HCT116 (cell line): ENCODE measurements at regions of chr14 and their contacts with region 1.

Region 1: GRCh38 chr14:20697273-20698017 is 8.9 kb downstream of the ANG start:
- DNase-seq: peak; percentile 55
- ATAC-seq: peak; percentile 98
- H3K4me3 ChIP-seq: no peak overlapping the region
- H3K27ac ChIP-seq: no peak overlapping the region
- H3K4me1 ChIP-seq: peaks cover 0 to 3% of the 10 kb centered on the region in 2 experiments; a peak in 1 of 4 replicates
- H3K27me3 ChIP-seq: no peaks in the 10 kb centered on the region
- CTCF ChIP-seq: peak; percentile 78 to 85 (median 80)
- POLR2A ChIP-seq: no peak
- RAD21 ChIP-seq: peak; percentile 81

Region 2: DNA sequence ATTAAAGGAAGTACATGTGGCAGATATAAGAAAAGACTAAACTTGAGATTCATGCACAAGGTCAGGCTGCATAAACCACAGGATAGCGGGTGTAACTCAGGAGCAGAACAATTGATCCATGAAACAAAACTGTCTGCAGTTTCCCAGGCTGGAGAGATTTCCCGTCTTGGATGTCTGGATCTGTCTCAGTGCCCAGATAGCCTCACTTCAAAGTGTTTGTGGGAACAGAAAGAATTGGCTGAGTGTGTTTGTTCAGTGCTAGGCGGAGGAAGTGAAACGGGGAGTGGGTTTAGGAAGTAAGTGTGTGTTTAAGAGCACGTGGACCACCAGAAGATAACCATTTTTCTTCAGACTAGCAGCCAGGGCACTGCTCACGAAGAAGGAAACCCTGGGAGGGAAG is 193.5 kb before region 1 on chr14:
- CTCF ChIA-PET with region 1: no interaction called
- POLR2A ChIA-PET with region 1: no interaction called
- RAD21 ChIA-PET with region 1: no interaction called
- intact Hi-C with region 1: no loop called
- DNase-seq: no peak
- ATAC-seq: no peak
- H3K4me3 ChIP-seq: no peak overlapping the region
- H3K27ac ChIP-seq: no peak overlapping the region
- H3K4me1 ChIP-seq: peaks cover 5 to 8% of the 10 kb centered on the region in 2 experiments; a peak in 3 of 4 replicates
- H3K27me3 ChIP-seq: no peaks in the 10 kb centered on the region
- CTCF ChIP-seq: no peak
- POLR2A ChIP-seq: no peak
- RAD21 ChIP-seq: no peak

Region 3: GRCh38 chr14:20707622-20708021 is 10.2 kb after region 1 on chr14:
- CTCF ChIA-PET with region 1: no interaction called
- POLR2A ChIA-PET with region 1: no interaction called
- RAD21 ChIA-PET with region 1: no interaction called
- intact Hi-C with region 1: no loop called
- DNase-seq: no peak
- ATAC-seq: no peak
- H3K4me3 ChIP-seq: no peak overlapping the region
- H3K27ac ChIP-seq: no peak overlapping the region
- H3K4me1 ChIP-seq: no peaks in the 10 kb centered on the region
- H3K27me3 ChIP-seq: no peaks in the 10 kb centered on the region
- CTCF ChIP-seq: no peak
- POLR2A ChIP-seq: no peak
- RAD21 ChIP-seq: no peak

Region 4: DNA sequence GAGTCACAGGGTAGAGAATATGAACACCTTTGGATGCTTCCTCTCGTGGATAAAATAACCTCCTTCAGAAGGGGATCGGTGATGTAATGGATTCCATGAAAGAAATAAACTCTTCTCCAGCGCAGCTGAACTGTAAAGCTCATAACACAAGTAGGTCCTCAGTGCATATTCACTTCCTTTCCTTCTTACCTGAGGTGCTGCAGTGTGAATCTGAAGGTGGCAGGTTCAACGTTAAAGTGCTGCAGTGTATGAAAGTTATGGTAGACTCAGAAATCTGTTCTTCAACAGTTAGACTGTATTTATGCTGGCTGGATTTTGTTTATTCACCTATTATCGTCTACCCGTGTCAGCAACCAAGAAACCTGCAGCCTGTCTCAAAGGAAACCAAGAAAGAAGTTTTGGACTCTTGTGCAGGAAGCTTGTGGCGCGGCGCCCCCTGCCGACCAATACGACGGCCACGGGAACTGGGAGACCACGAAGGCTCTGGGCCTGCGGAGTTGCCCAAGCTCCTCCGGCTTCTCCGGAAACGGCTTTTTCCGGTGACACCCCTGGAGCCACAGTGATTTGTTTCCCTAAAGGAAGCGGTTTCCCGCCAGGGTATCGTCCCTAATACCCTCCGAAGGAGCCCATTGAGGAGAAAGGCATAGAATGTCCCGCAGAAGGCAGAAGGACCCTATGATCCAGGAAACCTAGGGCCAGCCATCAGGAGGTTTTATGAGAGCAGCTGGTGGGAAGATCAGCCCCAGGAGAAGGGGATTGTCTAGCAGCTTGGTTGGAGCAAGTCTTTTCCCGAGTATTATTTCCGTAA is 176.1 kb after region 1 on chr14:
- CTCF ChIA-PET with region 1: interaction called, 11 read pairs
- POLR2A ChIA-PET with region 1: interaction called, 4 read pairs
- RAD21 ChIA-PET with region 1: no interaction called
- intact Hi-C with region 1: loop called (anchors 1 kb)
- DNase-seq: peak; percentile 79
- ATAC-seq: peak; percentile 99
- H3K4me3 ChIP-seq: peak overlapping the region; percentile 42 to 47
- H3K27ac ChIP-seq: peak overlapping the region; percentile 18
- H3K4me1 ChIP-seq: peaks cover 0 to 14% of the 10 kb centered on the region in 2 experiments; a peak in 2 of 4 replicates
- H3K27me3 ChIP-seq: no peaks in the 10 kb centered on the region
- CTCF ChIP-seq: peak; percentile 65 to 94 (median 93)
- POLR2A ChIP-seq: peak; percentile 13
- RAD21 ChIP-seq: peak; percentile 74

Region 5: GRCh38 chr14:21039585-21040369 is 342.3 kb after region 1 on chr14:
- CTCF ChIA-PET with region 1: interaction called, 5 read pairs
- POLR2A ChIA-PET with region 1: no interaction called
- RAD21 ChIA-PET with region 1: no interaction called
- intact Hi-C with region 1: loop called (anchors 1 kb)
- DNase-seq: peak; percentile 41
- ATAC-seq: peak; percentile 92
- H3K4me3 ChIP-seq: no peak overlapping the region
- H3K27ac ChIP-seq: no peak overlapping the region
- H3K4me1 ChIP-seq: peaks cover 0 to 7% of the 10 kb centered on the region in 2 experiments; a peak in 1 of 4 replicates
- H3K27me3 ChIP-seq: no peaks in the 10 kb centered on the region
- CTCF ChIP-seq: peak; percentile 58 to 61 (median 60); a peak in 5 of 6 replicates
- POLR2A ChIP-seq: no peak
- RAD21 ChIP-seq: peak; percentile 77